Gastrocnemius medialis (tissue), 4 donors: ENCODE measurements at regions of chr7 and their contacts with region 1.

Region 1: GRCh38 chr7:139675127-139676125 is 102.4 kb downstream of the HIPK2 start:
- DNase-seq: no peak
- ATAC-seq: no peak
- H3K4me3 ChIP-seq: no peak overlapping the region
- H3K27ac ChIP-seq: peak overlapping the region in 3 of 4 donors; percentile 8 to 47 (median 42)
- H3K4me1 ChIP-seq: peaks cover 11 to 18% of the 10 kb centered on the region in 2 donors
- H3K27me3 ChIP-seq: no peaks in the 10 kb centered on the region
- CTCF ChIP-seq: no peak
- POLR2A ChIP-seq: no peak

Region 2: DNA sequence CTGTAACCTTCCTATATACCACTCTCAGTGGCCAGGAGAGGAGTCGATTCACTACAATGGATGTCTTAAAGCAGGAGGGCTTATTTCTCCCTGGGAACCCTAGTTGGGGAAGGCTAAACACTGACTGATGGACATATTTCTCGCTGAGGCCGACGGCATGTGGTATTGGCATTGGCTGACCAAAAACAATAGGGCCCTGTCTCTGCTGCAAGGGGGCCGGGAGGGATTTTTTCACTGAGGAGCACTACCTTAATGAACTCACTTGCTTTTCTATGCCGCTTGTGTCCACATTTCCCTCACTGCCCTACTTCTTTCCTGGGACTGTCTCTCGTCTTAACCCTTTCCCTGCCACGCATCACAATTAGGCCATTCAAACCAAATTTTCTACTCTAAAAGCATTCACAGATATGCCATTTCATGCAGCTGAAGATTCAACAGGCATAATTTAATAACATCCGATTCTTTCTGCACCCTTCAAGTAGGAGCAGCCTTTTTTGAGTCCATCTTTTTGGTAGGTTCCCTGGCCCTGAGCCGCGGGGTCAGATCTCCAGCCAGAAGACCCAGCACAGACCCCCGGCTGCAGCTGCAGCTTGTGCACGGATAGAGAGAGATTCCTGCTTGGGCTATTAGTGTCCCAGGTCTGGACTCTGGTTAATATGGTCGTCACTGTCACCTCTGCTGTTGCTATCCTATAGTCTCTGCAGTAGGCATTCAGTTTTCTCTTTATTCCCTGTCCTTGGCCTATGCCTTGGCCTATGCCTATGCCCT is 16.3 kb before region 1 on chr7:
- in situ Hi-C with region 1: no loop called
- intact Hi-C with region 1: loop called (anchors 2 kb)
- DNase-seq: no peak
- ATAC-seq: no peak
- H3K4me3 ChIP-seq: no peak overlapping the region
- H3K27ac ChIP-seq: peak overlapping the region in 3 of 4 donors; percentile 12 to 59 (median 51)
- H3K4me1 ChIP-seq: peaks cover 31 to 34% of the 10 kb centered on the region in 2 donors
- H3K27me3 ChIP-seq: no peaks in the 10 kb centered on the region
- CTCF ChIP-seq: no peak
- POLR2A ChIP-seq: no peak

Region 3: GRCh38 chr7:139734395-139734794 is 59.0 kb after region 1 on chr7:
- in situ Hi-C with region 1: no loop called
- intact Hi-C with region 1: no loop called
- DNase-seq: peak; percentile 72
- ATAC-seq: peak; percentile 81 to 84
- H3K4me3 ChIP-seq: no peak overlapping the region
- H3K27ac ChIP-seq: peak overlapping the region; percentile 91 to 93 (median 92)
- H3K4me1 ChIP-seq: peaks cover 85 to 92% of the 10 kb centered on the region in 2 donors
- H3K27me3 ChIP-seq: no peaks in the 10 kb centered on the region
- CTCF ChIP-seq: no peak
- POLR2A ChIP-seq: peak in 1 of 2 donors; percentile 50